Heart right ventricle (tissue), 16 donors: ENCODE measurements at regions of chr2 and their contacts with region 1.

Region 1: GRCh38 chr2:160918906-160919503 is 241.2 kb upstream of the TANK start:
- DNase-seq: peak; percentile 66 to 71
- ATAC-seq: peak; percentile 77 to 94 (median 90)
- H3K4me3 ChIP-seq: no peak overlapping the region
- H3K27ac ChIP-seq: peak overlapping the region in 5 of 10 donors; percentile 3 to 34 (median 10)
- H3K4me1 ChIP-seq: peaks cover 0 to 40% (median 19%) of the 10 kb centered on the region in 9 donors
- H3K27me3 ChIP-seq: no peaks in the 10 kb centered on the region
- CTCF ChIP-seq: peak; percentile 56 to 79 (median 71)

Region 2: GRCh38 chr2:160324161-160324800 is 594.7 kb before region 1 on chr2:
- intact Hi-C with region 1: loop called in 2 of 10 experiments (anchors 5 to 10 kb)
- DNase-seq: peak; percentile 51 to 67
- ATAC-seq: peak in 7 of 8 donors; percentile 31 to 62 (median 40)
- H3K4me3 ChIP-seq: no peak overlapping the region
- H3K27ac ChIP-seq: peak overlapping the region in 3 of 10 donors; percentile 9 to 82 (median 36)
- H3K4me1 ChIP-seq: peaks cover 0 to 97% (median 77%) of the 10 kb centered on the region in 9 donors
- H3K27me3 ChIP-seq: no peaks in the 10 kb centered on the region
- CTCF ChIP-seq: peak; percentile 47 to 85 (median 73)

Region 3: DNA sequence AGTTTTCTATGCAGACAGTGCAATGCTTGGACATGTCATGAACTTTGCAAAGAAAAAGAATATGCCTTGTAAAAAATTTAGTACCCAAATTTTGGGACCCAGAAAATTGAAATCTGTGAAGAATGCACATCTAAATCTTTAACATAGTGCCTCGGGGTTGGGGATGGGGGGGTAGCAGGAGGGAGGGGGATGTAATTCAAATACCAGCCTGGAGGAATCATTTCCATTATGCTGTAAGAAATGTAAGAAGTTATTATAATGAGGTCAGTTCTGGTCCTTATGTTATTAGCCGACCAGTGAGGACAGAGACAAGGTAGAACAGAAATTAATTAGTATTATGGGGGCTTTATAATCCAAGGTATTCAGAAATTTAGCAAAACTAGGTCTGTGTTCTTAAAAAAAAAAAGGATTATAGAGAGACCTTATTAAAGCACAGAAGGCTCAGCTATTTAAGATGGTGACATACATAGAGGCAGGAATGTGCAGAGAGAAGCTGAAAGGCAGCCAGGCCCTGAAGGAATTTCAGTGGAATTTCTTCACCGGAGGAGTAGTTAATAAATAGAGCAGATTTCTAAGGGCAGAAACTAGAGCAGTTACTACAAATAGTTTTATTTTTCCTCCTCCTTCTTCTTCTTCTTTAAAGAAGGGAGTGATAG is 336.4 kb before region 1 on chr2:
- intact Hi-C with region 1: loop called in 1 of 10 experiments (anchors 10 kb)
- DNase-seq: no peak
- ATAC-seq: peak in 4 of 8 donors; percentile 46 to 72 (median 56)
- H3K4me3 ChIP-seq: no peak overlapping the region
- H3K27ac ChIP-seq: peak overlapping the region; percentile 5 to 77 (median 55)
- H3K4me1 ChIP-seq: peaks cover 0 to 38% (median 29%) of the 10 kb centered on the region in 9 donors
- H3K27me3 ChIP-seq: no peaks in the 10 kb centered on the region
- CTCF ChIP-seq: no peak

Region 4: DNA sequence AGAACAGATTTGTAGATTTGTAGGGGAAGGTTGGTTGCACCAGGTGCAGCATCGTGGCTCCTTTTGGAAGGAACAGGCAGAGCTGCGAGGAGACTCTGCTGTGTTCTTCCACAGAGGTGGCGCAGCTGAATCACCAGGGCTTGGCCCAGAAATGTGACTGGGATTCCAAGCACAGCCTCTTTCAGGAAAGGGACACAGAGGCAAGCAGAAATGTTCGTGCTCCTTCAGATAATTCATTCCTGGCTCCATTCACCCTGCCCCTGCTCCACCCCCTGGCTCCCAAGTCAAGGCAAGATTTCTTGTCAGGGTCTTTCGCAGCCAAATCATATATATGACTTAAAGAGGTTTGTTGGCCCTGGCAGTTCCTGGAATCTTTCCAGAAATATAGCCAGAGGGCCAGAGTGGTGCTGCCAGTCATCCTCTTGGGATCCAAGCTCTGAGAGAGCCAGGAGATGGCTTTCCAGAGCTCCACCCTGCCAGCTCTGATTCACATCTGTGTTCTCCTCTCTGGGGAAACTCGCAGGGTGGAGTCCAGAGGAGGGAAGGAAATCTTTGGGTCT is 37.3 kb after region 1 on chr2:
- intact Hi-C with region 1: loop called in 1 of 10 experiments (anchors 5 kb)
- DNase-seq: no peak
- ATAC-seq: peak in 4 of 8 donors; percentile 44 to 74 (median 57)
- H3K4me3 ChIP-seq: no peak overlapping the region
- H3K27ac ChIP-seq: peak overlapping the region in 5 of 10 donors; percentile 17 to 73 (median 30)
- H3K4me1 ChIP-seq: peaks cover 0 to 36% (median 29%) of the 10 kb centered on the region in 9 donors
- H3K27me3 ChIP-seq: no peaks in the 10 kb centered on the region
- CTCF ChIP-seq: no peak